Heart left ventricle (tissue), 16 donors: ENCODE measurements at regions of chr5 and their contacts with region 1.

Region 1: GRCh38 chr5:172714491-172715421 is 56.2 kb downstream of the DUSP1 start:
- DNase-seq: peak; percentile 82 to 89 (median 87)
- ATAC-seq: peak; percentile 64 to 81 (median 77)
- H3K4me3 ChIP-seq: peak overlapping the region in 1 of 12 donors; percentile 9
- H3K27ac ChIP-seq: peak overlapping the region; percentile 59 to 95 (median 78)
- H3K4me1 ChIP-seq: peaks cover 4 to 48% (median 38%) of the 10 kb centered on the region in 12 donors
- H3K27me3 ChIP-seq: no peaks in the 10 kb centered on the region
- CTCF ChIP-seq: peak; percentile 76 to 93 (median 86)
- POLR2A ChIP-seq: no peak

Region 2: DNA sequence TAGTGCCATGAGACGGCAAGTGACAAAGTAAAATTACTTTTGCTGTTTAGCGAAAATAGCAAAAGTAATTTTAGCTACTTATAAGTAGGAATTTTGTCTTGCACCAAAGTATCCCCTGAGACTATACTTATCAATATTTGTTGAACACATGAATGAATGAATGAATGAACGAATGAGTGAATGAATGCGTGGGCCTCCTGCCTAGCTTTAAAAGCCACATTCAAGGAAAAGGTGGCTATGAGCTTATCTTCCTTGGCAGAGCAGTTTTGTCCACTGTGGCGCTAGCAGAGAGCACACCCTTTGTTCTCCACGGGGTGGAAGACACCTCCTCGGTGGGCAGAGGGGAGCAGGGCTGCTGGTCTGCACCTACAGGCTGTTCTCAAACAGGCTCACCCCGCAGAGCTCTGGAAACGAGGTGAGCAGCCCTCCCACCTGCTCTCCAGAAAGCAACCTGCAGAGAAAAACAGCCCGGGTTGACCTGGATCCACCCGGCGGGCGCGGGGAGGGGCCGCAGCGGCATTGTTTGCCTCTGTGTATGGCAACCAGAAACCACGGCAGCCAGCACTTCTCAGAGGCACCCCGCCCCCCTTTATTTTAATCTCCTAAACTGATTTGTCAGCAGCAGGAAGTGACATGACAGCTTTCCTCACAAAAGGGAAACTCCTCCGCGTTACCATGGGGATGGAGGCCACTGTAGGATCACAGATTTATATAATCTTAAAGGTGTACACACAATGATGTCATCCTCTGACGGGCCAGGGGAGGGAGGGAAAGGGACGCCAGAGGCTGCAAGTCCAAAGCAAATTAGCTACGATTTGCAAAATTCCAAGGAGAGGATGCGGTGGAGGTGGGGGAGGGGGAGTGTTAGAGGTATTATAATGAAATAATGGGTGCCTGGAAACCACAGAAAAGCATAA is 50.4 kb after region 1 on chr5:
- intact Hi-C with region 1: loop called in 8 of 10 experiments (anchors 1 to 5 kb)
- DNase-seq: peak; percentile 94 to 98 (median 97)
- ATAC-seq: peak; percentile 69 to 81 (median 70)
- H3K4me3 ChIP-seq: peak overlapping the region in 11 of 12 donors; percentile 15 to 98 (median 90)
- H3K27ac ChIP-seq: peak overlapping the region; percentile 95 to 100 (median 100)
- H3K4me1 ChIP-seq: peaks cover 3 to 55% (median 27%) of the 10 kb centered on the region in 12 donors
- H3K27me3 ChIP-seq: no peaks in the 10 kb centered on the region
- CTCF ChIP-seq: no peak
- POLR2A ChIP-seq: peak in 1 of 2 donors; percentile 61

Region 3: GRCh38 chr5:172833686-172834414 is 119.1 kb after region 1 on chr5 and contains the start of gene ERGIC1:
- intact Hi-C with region 1: loop called in 1 of 10 experiments (anchors 10 kb)
- DNase-seq: peak; percentile 88 to 95 (median 91)
- ATAC-seq: peak; percentile 80 to 94 (median 92)
- H3K4me3 ChIP-seq: peak within 1 kb of the TSS; percentile 74 to 97 (median 85)
- H3K27ac ChIP-seq: peak within 1 kb of the TSS; percentile 64 to 91 (median 84)
- H3K4me1 ChIP-seq: peaks cover 3 to 60% (median 22%) of the 10 kb centered on the region in 12 donors
- H3K27me3 ChIP-seq: no peaks in the 10 kb centered on the region
- CTCF ChIP-seq: peak in 1 of 12 donors; percentile 5
- POLR2A ChIP-seq: peak in 1 of 2 donors; percentile 73
- total RNA-seq, gene ERGIC1: 67.0 to 109 (median 84.9) TPM

Region 4: GRCh38 chr5:172902497-172903200 is 187.9 kb after region 1 on chr5:
- intact Hi-C with region 1: loop called in 2 of 10 experiments (anchors 2 to 10 kb)
- DNase-seq: peak; percentile 81 to 87 (median 85)
- ATAC-seq: peak; percentile 48 to 72 (median 59)
- H3K4me3 ChIP-seq: no peak overlapping the region
- H3K27ac ChIP-seq: peak overlapping the region; percentile 28 to 96 (median 90)
- H3K4me1 ChIP-seq: peaks cover 2 to 82% (median 64%) of the 10 kb centered on the region in 12 donors
- H3K27me3 ChIP-seq: no peaks in the 10 kb centered on the region
- CTCF ChIP-seq: peak; percentile 18 to 71 (median 58)
- POLR2A ChIP-seq: no peak

Region 5: DNA sequence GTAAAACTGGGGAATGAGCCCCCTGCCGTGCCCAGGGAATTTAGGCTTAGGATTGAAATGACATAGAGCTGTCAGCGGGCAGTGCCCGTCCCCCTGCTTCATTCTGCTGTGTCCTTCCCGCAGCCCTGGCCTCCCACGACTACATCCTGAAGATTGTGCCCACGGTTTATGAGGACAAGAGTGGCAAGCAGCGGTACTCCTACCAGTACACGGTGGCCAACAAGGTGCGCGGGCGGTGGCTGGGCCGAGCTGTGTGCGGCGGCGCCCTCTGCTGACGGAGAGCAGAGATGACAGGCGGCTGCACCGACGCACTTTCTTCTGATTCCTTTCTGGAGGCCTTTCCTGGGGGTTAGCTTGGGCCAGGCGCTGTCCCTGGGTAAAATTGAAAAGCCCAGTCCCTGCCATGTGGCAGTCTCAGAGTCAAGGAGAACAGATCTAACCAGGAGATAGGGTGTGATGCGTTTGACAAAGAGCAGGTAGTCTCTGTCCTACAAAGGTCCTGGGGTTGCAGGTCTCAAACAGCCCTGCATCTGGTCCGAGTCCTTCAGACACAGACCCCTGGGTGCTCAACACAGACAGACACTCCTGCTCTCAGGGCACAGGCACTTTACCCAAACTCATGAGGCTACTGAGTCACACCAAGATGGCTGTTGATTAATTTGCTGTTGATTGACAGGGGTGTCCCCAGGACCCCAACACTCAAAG is 217.7 kb after region 1 on chr5:
- intact Hi-C with region 1: loop called (anchors 1 to 2 kb)
- DNase-seq: peak; percentile 76 to 90 (median 78)
- ATAC-seq: peak; percentile 65 to 89 (median 84)
- H3K4me3 ChIP-seq: no peak overlapping the region
- H3K27ac ChIP-seq: peak overlapping the region in 11 of 12 donors; percentile 1 to 80 (median 72)
- H3K4me1 ChIP-seq: peaks cover 0 to 25% (median 18%) of the 10 kb centered on the region in 12 donors
- H3K27me3 ChIP-seq: no peaks in the 10 kb centered on the region
- CTCF ChIP-seq: peak; percentile 91 to 99 (median 96)
- POLR2A ChIP-seq: no peak